Body of pancreas (tissue), 4 donors: ENCODE measurements at regions of chr5 and their contacts with region 1.

Region 1: DNA sequence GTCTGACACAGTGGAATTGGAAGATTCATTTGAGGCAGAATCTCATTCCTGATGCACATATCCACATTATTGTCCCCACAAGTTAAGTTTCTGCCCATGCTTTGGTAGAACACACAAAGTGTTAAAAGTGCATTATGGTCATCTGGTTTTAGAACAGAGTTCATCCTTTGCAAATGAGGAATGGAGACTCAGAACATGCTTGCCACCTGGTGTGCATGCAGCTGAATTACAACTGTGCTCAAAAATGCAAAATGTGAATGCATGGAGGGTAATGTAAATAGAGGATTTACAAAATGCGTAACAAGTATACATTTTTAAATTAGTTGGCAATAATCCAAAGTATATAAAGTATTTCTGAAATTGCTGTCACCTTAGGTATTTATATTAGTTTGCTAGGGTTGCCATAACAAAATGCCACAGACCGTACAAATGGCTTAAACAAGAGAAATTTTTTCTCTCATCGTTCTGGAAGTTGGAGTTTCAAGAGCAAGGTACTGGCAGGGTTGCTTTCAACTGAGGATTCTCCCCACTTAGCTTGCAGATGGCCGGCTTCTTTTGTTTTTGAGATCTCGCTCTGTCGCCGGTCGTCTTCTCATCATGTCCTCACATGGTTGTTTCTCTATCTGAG is 671.2 kb downstream of the TAF11L14 start:
- DNase-seq: no peak
- ATAC-seq: no peak
- H3K4me3 ChIP-seq: no peak overlapping the region
- H3K27ac ChIP-seq: no peak overlapping the region
- H3K4me1 ChIP-seq: no peaks in the 10 kb centered on the region
- H3K27me3 ChIP-seq: no peaks in the 10 kb centered on the region
- CTCF ChIP-seq: peak; percentile 22 to 71 (median 67)
- POLR2A ChIP-seq: no peak

Region 2: DNA sequence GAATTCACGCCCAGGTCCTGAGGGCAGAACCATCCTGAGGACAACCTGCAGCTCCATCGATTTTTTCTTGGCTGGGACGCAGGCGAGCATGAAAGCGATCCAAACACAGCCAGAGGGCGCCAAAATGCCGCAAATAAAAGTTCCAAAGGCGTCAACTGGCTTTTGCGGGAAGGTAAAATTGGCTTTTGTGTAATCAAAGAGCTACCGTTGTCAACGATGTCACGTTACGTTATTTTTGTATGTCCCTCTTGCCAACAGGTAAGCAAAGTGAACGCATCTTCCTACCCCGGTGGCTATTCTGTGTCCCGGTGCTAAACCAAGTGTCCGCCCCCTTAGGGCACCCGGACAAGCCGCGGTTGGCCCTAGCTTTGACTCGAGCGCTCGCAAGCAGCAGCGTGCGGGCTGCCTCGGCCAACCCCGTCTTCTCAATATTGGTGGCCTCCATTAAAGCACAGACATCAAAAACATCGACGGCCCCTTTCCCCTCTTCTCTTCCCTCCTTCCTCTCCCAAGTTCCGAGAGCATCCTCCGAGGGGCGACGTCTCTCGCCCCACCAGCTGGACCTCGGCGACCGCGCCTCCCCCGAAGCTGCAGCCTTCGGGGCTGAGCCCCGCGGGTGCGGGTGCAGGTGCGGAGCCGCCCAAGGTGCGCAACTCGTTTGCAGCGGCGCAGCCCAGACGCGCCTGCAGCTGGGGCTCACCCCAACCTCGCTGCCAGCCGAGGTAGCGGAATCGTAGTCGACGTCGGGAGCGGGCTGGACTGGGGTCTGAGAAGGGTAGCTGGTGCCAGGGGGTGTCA is 1089.0 kb before region 1 on chr5:
- intact Hi-C with region 1: loop called (anchors 5 kb)
- DNase-seq: peak; percentile 82 to 87 (median 85)
- ATAC-seq: peak; percentile 81
- H3K4me3 ChIP-seq: no peak overlapping the region
- H3K27ac ChIP-seq: no peak overlapping the region
- H3K4me1 ChIP-seq: peaks cover 25% of the 10 kb centered on the region
- H3K27me3 ChIP-seq: peaks cover 0 to 14% of the 10 kb centered on the region in 2 donors
- CTCF ChIP-seq: peak; percentile 72 to 91 (median 88)
- POLR2A ChIP-seq: no peak